ENCODE measurements at regions of chr17 and their contacts with region 1.

Region 1: GRCh38 chr17:46028981-46029565 is 30.0 kb downstream of the STH start:
- DNase-seq: no peak

Region 2: GRCh38 chr17:45852535-45853297 is 176.4 kb before region 1 on chr17:
- CTCF ChIA-PET with region 1: no interaction called
- POLR2A ChIA-PET with region 1: no interaction called
- DNase-seq: peak; percentile 73

Region 3: GRCh38 chr17:46044286-46044928 is 15.3 kb after region 1 on chr17:
- CTCF ChIA-PET with region 1: interaction called, 13 read pairs
- POLR2A ChIA-PET with region 1: no interaction called
- DNase-seq: peak; percentile 72

Region 4: GRCh38 chr17:46108550-46109110 is 79.6 kb after region 1 on chr17:
- CTCF ChIA-PET with region 1: no interaction called
- POLR2A ChIA-PET with region 1: no interaction called
- DNase-seq: no peak

Region 5: GRCh38 chr17:46144246-46144645 is 115.2 kb after region 1 on chr17:
- CTCF ChIA-PET with region 1: no interaction called
- POLR2A ChIA-PET with region 1: no interaction called
- DNase-seq: no peak

Region 6: DNA sequence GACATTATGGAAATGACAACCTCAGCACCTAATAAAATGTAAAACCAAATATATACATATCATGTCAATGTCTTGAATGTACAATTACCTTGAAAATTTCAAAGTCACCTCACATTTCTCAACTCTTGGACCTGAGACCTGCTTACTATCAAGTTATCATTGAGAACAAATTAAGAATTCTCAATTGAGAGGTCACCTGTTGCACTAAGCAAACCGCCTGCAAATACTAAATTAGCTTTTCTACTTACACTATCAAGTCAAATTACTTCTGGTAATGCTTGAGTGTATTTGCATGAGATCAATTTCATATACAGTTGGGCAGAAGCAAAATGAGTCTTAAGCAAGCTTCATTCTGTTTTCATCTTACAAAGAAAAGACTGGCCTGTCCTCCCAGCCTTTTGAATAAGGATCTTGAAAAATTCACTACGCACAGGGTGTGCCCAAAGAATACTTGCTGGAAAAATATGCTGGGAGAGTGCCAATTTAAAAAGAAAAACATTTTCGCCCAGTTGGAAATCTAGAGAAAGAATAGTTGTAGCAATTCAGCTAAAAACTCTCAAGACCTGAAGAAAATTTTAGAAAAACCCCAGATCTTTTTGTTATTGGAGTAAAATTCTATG is 128.5 kb after region 1 on chr17:
- CTCF ChIA-PET with region 1: no interaction called
- POLR2A ChIA-PET with region 1: no interaction called
- DNase-seq: no peak